ENCODE measurements at regions of chr2 and their contacts with region 1.

Region 1: GRCh38 chr2:163735685-163736432 is at the start of gene FIGN:
- DNase-seq: peak; percentile 67 to 85 (median 84)
- ATAC-seq: peak; percentile 80 to 92 (median 85)
- H3K4me3 ChIP-seq: peak within 1 kb of the TSS; percentile 12 to 80 (median 62)
- H3K27ac ChIP-seq: peak within 1 kb of the TSS; percentile 87 to 96 (median 92)
- H3K4me1 ChIP-seq: peaks cover 0 to 7% (median 0%) of the 10 kb centered on the region in 12 donors
- H3K27me3 ChIP-seq: peaks cover 0 to 27% (median 0%) of the 10 kb centered on the region in 9 donors
- CTCF ChIP-seq: no peak
- POLR2A ChIP-seq: peak in 1 of 2 donors; percentile 55
- total RNA-seq, gene FIGN: 7.1 to 16.5 (median 12.4) TPM

Region 2: DNA sequence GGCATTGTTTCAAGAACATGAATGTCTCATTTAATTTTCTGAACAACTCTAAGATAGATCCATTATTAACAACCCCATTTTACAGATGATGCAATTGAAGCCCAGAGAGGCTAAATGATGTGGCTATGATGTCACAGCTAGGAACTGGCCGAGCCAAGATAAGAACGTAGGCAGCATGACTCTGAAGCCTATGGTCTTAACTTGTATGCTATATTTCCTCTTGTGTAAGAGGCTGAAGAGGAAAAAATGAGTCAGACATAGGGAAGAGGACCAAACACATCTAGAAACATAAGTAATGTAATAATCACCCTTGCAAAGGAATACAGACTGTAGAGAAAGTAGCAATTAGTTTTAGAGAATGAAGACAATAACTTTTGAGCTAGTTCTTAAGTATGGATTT is 416.9 kb before region 1 on chr2:
- intact Hi-C with region 1: no loop called
- DNase-seq: no peak
- ATAC-seq: no peak
- H3K4me3 ChIP-seq: no peak overlapping the region
- H3K27ac ChIP-seq: no peak overlapping the region
- H3K4me1 ChIP-seq: no peaks in the 10 kb centered on the region
- H3K27me3 ChIP-seq: no peaks in the 10 kb centered on the region
- CTCF ChIP-seq: no peak
- POLR2A ChIP-seq: no peak

Region 3: DNA sequence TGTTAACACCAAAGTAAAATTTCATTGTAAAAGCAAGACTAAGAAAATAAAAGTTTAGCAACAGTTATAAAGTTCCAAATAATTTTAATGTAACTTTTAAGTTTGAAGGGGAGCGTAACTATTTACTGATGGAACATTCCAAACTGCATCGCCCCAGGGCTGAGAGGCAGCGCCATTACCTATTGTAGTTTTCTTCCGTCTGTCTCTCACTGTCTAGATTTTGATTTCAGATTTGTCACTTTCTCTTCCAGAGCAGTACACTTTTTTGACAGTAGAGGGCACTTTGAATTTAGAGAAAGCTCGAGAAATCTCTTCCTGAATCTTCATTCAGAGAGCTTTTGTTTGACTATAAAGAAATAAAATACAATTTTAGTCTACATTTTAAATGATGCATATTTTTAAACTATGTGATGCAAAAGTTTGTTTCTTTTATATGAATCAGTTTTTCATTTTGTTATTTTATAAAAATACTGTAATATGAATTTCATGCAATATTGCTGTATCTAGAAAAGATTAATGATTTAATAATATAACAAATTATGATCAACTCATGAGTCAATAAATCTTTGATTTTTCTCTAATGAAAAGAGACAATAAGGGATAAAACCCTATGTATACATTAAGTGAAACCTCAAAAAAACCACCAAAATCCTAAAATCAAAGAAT is 389.8 kb before region 1 on chr2:
- intact Hi-C with region 1: loop called in 6 of 10 experiments (anchors 2 to 5 kb)
- DNase-seq: peak in 1 of 5 donors; percentile 10
- ATAC-seq: no peak
- H3K4me3 ChIP-seq: no peak overlapping the region
- H3K27ac ChIP-seq: no peak overlapping the region
- H3K4me1 ChIP-seq: peaks cover 0 to 17% (median 6%) of the 10 kb centered on the region in 12 donors
- H3K27me3 ChIP-seq: no peaks in the 10 kb centered on the region
- CTCF ChIP-seq: peak; percentile 64 to 91 (median 82)
- POLR2A ChIP-seq: no peak

Region 4: DNA sequence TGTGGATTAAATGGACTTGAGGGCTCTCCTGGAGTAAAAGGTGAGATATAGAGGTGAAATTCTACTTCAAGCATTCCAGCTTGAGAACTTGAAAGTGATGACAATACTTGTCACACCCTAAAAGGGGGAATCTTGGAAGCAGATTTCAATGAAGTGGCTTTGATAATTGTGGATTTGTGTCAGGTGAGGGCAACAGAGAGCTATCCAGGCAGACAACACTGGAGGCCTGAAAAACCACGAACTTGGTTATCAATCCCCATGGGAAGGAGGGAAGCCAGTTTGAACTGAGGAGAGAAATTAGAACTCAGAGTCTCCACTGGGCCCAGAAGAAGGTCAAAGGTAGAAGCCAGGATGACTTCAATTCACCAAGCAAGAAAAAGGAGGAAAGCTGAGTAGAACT is 263.9 kb before region 1 on chr2:
- intact Hi-C with region 1: loop called in 7 of 10 experiments (anchors 1 to 10 kb)
- DNase-seq: no peak
- ATAC-seq: peak; percentile 32 to 70 (median 52)
- H3K4me3 ChIP-seq: no peak overlapping the region
- H3K27ac ChIP-seq: no peak overlapping the region
- H3K4me1 ChIP-seq: peaks cover 0 to 19% (median 0%) of the 10 kb centered on the region in 12 donors
- H3K27me3 ChIP-seq: no peaks in the 10 kb centered on the region
- CTCF ChIP-seq: peak in 10 of 12 donors; percentile 17 to 56 (median 37)
- POLR2A ChIP-seq: no peak

Region 5: GRCh38 chr2:163626639-163627109 is 109.2 kb before region 1 on chr2:
- intact Hi-C with region 1: loop called in 1 of 10 experiments (anchors 10 kb)
- DNase-seq: peak in 1 of 5 donors; percentile 25
- ATAC-seq: peak; percentile 15 to 71 (median 54)
- H3K4me3 ChIP-seq: no peak overlapping the region
- H3K27ac ChIP-seq: peak overlapping the region in 4 of 12 donors; percentile 12 to 48 (median 26)
- H3K4me1 ChIP-seq: peaks cover 0 to 12% (median 0%) of the 10 kb centered on the region in 12 donors
- H3K27me3 ChIP-seq: no peaks in the 10 kb centered on the region
- CTCF ChIP-seq: no peak
- POLR2A ChIP-seq: no peak

Region 6: DNA sequence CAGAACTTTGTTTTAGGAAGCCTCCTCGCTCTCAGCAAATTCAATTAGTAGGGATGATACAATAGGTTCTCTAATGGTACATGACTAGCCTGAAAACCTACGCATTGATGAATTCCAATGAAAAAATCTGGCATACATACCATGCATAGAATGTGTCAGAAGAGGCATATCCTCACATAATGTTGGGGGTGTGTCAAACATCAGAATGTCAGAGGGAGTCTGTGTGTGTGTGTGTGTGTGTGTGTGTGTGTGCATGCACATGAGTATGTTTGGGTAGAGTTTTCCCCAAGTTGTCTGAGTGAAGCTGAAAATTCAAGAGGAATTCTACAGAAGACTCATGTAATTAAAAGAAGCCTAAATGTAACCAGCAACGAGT is 78.6 kb before region 1 on chr2:
- intact Hi-C with region 1: loop called in 3 of 10 experiments (anchors 10 kb)
- DNase-seq: no peak
- ATAC-seq: no peak
- H3K4me3 ChIP-seq: no peak overlapping the region
- H3K27ac ChIP-seq: peak overlapping the region in 8 of 12 donors; percentile 34 to 74 (median 64)
- H3K4me1 ChIP-seq: peaks cover 0 to 45% (median 9%) of the 10 kb centered on the region in 12 donors
- H3K27me3 ChIP-seq: no peaks in the 10 kb centered on the region
- CTCF ChIP-seq: no peak
- POLR2A ChIP-seq: no peak

Region 7: DNA sequence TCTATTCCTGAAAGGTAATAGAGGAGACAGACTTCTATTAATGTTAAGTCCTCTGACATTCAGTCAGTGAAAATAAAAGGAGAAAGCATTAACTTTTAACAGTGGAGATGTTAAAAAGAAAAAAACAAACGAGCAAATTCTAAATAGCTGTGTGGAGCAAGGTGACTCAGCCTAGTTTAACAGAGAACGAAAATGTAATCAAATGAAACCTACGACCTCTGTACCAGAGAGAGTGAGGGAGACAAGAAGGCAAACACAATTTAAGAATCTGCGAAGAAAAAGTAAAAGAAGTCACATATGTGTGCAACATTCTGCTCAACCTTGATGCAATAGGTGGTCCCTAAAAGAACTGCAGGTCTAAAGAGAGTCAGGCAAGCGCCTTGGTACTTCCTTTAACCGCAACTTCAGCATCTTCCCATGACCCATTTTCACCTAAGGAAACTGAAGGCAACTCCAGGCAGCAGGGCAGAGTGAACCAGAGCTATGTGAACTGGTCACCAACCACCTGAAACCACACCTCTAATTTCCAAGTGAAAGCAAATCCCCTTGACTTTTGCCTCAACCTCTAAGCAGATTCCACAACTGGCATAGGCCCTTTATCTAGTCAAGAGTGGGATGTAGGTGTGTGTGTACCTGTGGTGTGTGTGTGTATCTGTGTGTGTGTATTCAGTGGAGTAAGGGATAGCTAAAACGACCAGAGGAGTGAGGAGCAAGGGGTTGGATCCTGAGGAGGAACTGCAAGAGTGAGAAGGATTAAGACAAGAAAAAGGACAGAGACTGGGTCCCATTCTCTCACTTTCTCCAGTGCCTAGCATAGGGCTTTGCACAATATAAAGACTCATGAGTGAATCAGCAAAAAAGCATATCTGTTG is 43.0 kb before region 1 on chr2:
- intact Hi-C with region 1: loop called in 1 of 10 experiments (anchors 5 kb)
- DNase-seq: no peak
- ATAC-seq: peak in 1 of 4 donors; percentile 12
- H3K4me3 ChIP-seq: no peak overlapping the region
- H3K27ac ChIP-seq: peak overlapping the region in 10 of 12 donors; percentile 10 to 58 (median 16)
- H3K4me1 ChIP-seq: peaks cover 0 to 40% (median 19%) of the 10 kb centered on the region in 12 donors
- H3K27me3 ChIP-seq: no peaks in the 10 kb centered on the region
- CTCF ChIP-seq: no peak
- POLR2A ChIP-seq: no peak

Region 8: DNA sequence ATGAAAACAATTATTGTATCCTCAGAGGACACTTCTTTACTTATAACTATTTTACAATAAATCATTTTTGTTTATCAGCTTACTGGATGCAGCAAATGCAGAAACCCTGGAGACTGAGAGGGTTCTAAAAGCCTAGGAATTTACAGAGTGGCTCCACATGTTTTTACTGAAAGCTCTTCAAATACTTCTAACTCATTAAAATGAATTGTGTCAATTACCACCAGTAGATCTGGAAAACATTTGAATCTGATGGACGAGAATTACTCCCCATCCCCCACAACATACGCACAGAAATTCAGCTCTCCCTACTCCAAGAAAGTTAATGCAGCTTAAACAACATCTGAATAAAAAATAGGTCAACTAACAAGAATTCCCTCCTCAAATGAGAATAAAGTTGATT is 319.8 kb after region 1 on chr2:
- intact Hi-C with region 1: loop called in 4 of 10 experiments (anchors 5 to 10 kb)
- DNase-seq: no peak
- ATAC-seq: no peak
- H3K4me3 ChIP-seq: no peak overlapping the region
- H3K27ac ChIP-seq: no peak overlapping the region
- H3K4me1 ChIP-seq: peaks cover 0 to 19% (median 0%) of the 10 kb centered on the region in 12 donors
- H3K27me3 ChIP-seq: no peaks in the 10 kb centered on the region
- CTCF ChIP-seq: no peak
- POLR2A ChIP-seq: no peak